Left lung (tissue), 14 donors: ENCODE measurements at regions of chr11 and their contacts with region 1.

Region 1: GRCh38 chr11:92480499-92480898 is 255.9 kb downstream of the FAT3 start:
- DNase-seq: no peak
- ATAC-seq: no peak
- H3K4me3 ChIP-seq: no peak overlapping the region
- H3K27ac ChIP-seq: no peak overlapping the region
- H3K4me1 ChIP-seq: no peaks in the 10 kb centered on the region
- H3K27me3 ChIP-seq: no peaks in the 10 kb centered on the region
- CTCF ChIP-seq: no peak

Region 2: DNA sequence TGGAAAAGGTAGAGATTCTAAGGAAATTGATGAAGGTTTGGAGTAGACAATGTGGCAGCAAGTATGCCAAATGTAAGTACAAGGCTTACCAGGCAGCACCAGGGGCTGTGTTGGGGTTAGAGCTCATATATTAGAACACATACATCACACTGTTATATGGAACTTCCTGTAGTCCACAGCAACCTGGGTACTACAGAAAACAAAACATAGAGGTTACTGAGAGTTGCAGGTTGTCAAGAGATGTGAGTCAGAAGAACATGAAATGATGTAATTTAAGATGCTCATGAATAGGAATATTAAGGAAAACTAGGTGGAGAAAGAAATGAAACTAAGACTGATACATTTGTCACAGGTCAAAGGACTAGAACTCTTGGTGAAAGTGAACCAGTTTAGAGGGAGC is 233.9 kb before region 1 on chr11:
- intact Hi-C with region 1: loop called in 1 of 2 experiments (anchors 10 kb)
- DNase-seq: no peak
- ATAC-seq: no peak
- H3K4me3 ChIP-seq: no peak overlapping the region
- H3K27ac ChIP-seq: no peak overlapping the region
- H3K4me1 ChIP-seq: no peaks in the 10 kb centered on the region
- H3K27me3 ChIP-seq: no peaks in the 10 kb centered on the region
- CTCF ChIP-seq: no peak